Posterior cingulate gyrus (tissue), 11 donors: ENCODE measurements at regions of chr2 and their contacts with region 1.

Region 1: GRCh38 chr2:234550511-234551107 is 53.7 kb upstream of the ARL4C start:
- DNase-seq: peak in 9 of 10 donors; percentile 21 to 94 (median 68)

Region 2: GRCh38 chr2:234670052-234670451 is 119.4 kb after region 1 on chr2:
- intact Hi-C with region 1: no loop called
- DNase-seq: no peak

Region 3: GRCh38 chr2:235106874-235107639 is 556.4 kb after region 1 on chr2:
- intact Hi-C with region 1: loop called (anchors 1 kb)
- DNase-seq: peak in 9 of 10 donors; percentile 34 to 95 (median 76)